H1 (cell line): ENCODE measurements at regions of chr9 and their contacts with region 1.

Region 1: DNA sequence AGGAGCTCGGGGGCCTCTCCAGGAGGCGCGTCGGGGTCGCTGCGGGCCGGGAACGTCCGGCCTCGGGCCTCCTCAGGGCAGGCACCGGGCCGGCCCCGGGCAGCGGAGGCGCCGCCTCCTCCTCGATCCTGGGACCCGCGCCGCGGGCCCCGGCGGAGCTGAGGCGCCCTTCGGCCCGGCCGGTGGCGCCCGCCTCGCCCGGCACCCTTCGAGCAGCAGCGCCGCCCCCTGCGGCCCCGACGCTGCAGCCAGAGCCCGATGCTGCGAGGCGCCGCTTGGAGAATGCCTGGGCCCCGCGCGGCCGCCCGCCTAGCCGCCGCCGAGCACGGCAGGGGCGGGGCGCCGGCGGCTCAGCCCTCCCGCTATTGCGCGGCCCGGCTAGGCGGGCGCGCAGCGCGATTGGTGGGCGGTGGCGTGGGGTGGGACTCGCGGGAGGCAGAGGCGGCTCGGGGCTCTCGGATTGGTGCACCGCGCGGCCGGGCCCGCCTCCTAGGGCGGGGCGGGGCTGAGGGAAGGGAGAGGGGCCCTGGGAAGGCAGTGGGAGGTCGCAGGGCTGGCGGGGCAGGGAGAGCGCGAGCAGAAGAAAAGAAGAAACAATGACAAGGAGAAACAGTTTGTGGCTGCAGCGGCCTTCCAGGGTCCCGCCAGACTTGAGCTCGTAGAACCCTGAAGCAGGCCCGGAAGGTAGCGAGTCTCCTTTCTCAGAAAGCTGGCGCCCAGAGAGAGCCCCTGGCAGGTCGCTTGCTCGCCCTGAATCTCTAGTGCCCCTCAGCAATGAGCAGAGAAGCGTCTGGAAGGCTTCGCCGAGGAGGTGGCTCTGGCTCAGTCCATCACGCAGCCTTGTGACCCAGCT is at the start of gene EEIG1:
- DNase-seq: peak; percentile 80 to 97
- H3K4me3 ChIP-seq: peak within 1 kb of the TSS; percentile 88 to 99 (median 93)
- H3K27ac ChIP-seq: peak within 1 kb of the TSS; percentile 79
- H3K4me1 ChIP-seq: peaks cover 4 to 34% (median 24%) of the 10 kb centered on the region in 4 experiments
- H3K27me3 ChIP-seq: no peaks in the 10 kb centered on the region
- CTCF ChIP-seq: no peak; a peak in 1 of 4 replicates
- EP300 ChIP-seq: no peak
- POLR2A ChIP-seq: no peak; a peak in 2 of 3 replicates
- RAD21 ChIP-seq: no peak
- total RNA-seq, gene EEIG1: 50.8 and 51.3 TPM in 2 replicates

Region 2: DNA sequence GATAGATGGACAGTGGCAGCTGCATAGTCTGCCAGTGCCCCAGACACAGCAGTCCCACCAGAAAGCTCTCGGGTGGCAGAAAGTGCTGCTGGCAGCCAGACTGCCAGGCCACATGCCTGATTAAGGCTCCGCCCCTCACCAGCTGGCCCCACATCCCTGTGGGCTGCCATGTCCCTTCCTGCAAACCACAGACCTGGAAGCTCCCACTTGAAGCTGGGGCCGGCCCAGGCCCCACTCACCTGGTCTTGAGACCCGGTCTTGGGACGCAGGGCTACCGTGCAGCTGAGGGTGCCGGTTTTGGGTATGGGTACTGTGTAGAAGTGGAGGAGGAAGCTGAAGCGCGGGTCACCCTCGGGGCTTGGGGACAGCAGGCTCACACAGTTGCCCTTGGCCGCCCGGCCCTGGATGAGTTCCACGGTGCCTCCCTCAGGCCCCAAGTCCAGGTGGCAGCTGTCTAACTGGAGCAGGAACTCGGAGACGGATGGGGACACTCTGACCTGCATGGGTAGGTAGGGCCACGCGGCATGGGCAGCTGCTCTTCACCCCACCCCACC is 163.0 kb before region 1 on chr9:
- CTCF ChIA-PET with region 1: no interaction called
- POLR2A ChIA-PET with region 1: no interaction called
- DNase-seq: no peak
- H3K4me3 ChIP-seq: no peak overlapping the region
- H3K27ac ChIP-seq: no peak overlapping the region
- H3K4me1 ChIP-seq: no peaks in the 10 kb centered on the region
- H3K27me3 ChIP-seq: no peaks in the 10 kb centered on the region
- CTCF ChIP-seq: no peak
- EP300 ChIP-seq: no peak
- POLR2A ChIP-seq: no peak
- RAD21 ChIP-seq: no peak

Region 3: DNA sequence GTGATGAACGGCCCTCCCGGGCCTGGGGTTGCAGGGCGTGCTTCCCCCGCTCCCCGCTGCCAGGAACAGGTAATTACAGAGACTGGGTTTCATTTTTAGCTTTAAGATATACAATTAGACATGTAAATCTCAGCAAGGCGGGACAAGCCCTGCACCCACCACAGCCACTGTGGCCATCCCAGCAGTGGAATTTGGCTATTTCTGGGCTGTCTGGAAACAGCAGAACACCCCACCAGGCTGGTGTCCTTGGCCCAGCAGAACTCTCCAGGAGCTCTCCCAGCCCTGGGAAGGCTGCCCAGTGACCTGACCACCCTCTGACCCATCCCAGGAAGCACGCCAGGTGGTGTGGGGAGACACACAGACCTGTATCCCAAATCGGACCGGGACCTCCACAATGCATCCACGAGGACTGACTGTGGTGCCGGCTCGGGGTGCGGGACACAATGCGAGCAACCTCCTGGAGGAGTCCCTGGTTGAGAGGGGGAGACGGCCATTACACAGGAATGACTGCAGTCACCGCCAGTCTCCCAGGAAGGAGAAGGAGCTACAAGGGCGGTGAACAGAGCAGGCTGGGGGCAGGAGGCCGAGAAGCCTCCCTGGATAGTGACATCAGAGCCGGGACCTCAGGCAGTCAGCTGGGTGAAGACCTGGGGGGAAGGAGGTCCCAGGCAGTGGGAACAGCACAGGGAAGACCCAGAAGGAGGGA is 17.4 kb before region 1 on chr9:
- CTCF ChIA-PET with region 1: interaction called, 7 read pairs
- POLR2A ChIA-PET with region 1: interaction called, 16 read pairs
- DNase-seq: no peak
- H3K4me3 ChIP-seq: no peak overlapping the region
- H3K27ac ChIP-seq: no peak overlapping the region
- H3K4me1 ChIP-seq: peaks cover 0 to 47% (median 13%) of the 10 kb centered on the region in 4 experiments; a peak in 5 of 7 replicates
- H3K27me3 ChIP-seq: no peaks in the 10 kb centered on the region
- CTCF ChIP-seq: no peak
- EP300 ChIP-seq: no peak
- POLR2A ChIP-seq: no peak
- RAD21 ChIP-seq: no peak